Dendritic cell treated with granulocyte-macrophage colony-stimulating factor and Interleukin-4, amounts not matched to agents 40 ng/mL and 50 ng/mL, for 4 days (primary cell): ENCODE measurements at regions of chrX and their contacts with region 1.

Region 1: GRCh38 chrX:2608638-2609430 is 82.3 kb upstream of the CD99 start:
- H3K4me3 Mint-ChIP-seq: peak overlapping the region; percentile 96
- H3K27ac Mint-ChIP-seq: peak overlapping the region; percentile 83
- H3K4me1 Mint-ChIP-seq: peaks cover 52% of the 10 kb centered on the region
- H3K27me3 Mint-ChIP-seq: no peaks in the 10 kb centered on the region

Region 2: GRCh38 chrX:1661048-1661921 is 947.5 kb before region 1 on chrX:
- intact Hi-C with region 1: loop called (anchors 2 kb)
- H3K4me3 Mint-ChIP-seq: peak overlapping the region; percentile 67
- H3K27ac Mint-ChIP-seq: peak overlapping the region; percentile 72
- H3K4me1 Mint-ChIP-seq: peaks cover 27% of the 10 kb centered on the region
- H3K27me3 Mint-ChIP-seq: no peaks in the 10 kb centered on the region

Region 3: DNA sequence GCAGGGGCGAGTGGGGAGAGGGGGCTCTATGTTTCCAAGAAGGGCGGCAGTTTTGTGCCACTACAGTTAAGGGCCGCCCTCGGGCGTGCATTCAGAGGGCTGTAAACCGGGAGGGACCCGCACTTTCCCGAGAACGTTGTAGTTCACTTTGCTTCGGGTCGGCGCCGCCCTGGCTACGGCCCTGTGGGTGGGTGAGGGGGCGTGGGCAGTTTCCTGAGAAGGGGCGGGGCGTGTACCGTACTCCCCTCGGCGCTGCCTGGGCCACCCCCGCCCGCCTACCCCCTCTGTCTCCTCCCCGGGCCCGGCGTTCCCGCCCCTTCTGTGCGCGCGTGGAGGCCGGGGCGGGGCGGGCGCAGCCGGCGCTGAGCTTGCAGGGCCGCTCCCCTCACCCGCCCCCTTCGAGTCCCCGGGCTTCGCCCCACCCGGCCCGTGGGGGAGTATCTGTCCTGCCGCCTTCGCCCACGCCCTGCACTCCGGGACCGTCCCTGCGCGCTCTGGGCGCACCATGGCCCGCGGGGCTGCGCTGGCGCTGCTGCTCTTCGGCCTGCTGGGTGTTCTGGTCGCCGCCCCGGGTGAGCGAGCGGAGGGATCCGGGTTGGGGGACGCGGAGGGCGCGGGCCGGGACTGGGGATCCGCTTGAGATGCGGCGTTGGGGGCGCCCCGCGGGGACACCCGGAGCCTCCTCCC is 82.2 kb after region 1 on chrX and contains the start of gene CD99:
- intact Hi-C with region 1: loop called (anchors 5 kb)
- H3K4me3 Mint-ChIP-seq: peak within 1 kb of the TSS; percentile 88
- H3K27ac Mint-ChIP-seq: peak within 1 kb of the TSS; percentile 85
- H3K4me1 Mint-ChIP-seq: peaks cover 41% of the 10 kb centered on the region
- H3K27me3 Mint-ChIP-seq: peaks cover 2% of the 10 kb centered on the region